Activated CD4-positive, alpha-beta memory T cell treated with anti-CD3 and anti-CD28 coated beads for 36 hours (primary cell): ENCODE measurements at regions of chr11 and their contacts with region 1.

Region 1: DNA sequence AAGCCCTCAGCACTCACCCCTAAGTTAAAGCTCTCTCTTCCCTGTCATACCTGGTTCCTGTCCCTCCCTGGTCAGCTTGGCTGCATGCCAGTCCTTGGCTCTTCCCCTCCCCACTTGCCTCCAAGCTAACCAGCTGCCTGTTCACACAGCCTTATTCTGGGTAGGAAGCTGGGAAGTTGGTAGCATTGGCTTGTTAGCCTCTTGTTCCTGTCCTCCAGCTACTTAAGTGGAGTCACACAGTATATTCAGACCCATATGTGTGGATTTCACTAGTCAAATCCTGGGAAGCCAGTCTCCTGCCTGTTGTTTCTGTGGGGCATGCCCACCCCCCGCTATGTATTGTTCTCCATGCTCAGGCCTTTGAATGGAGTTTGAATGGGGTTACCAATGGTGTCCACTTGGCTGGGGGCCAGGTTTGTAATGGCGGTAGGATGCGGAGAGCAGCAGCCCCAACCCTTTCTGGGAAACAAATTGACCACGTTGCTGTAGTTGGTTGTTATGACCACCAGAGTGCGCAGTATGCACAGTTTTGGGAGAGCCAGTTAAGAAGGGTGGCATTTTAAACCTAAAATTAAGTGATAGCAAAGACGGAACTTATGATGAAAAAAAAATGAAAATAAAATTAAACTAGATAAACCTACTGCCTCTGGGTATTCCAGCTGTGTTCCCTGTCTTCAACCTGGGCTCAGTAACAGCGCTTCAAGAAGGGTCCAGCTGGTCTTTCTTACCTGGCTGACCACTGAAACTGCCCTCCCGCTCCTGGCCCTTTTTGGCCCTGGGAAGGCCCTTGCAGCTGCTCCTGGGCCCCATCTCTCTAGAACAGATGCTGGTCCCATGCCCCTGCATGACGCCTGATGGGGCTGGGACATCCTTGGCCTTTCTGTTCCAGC is 10.7 kb upstream of the RPS3 start:
- DNase-seq: peak; percentile 84
- H3K4me3 Mint-ChIP-seq: no peak overlapping the region
- H3K27ac Mint-ChIP-seq: no peak overlapping the region
- H3K4me1 Mint-ChIP-seq: peaks cover 10% of the 10 kb centered on the region
- H3K27me3 Mint-ChIP-seq: peaks cover 6% of the 10 kb centered on the region

Region 2: DNA sequence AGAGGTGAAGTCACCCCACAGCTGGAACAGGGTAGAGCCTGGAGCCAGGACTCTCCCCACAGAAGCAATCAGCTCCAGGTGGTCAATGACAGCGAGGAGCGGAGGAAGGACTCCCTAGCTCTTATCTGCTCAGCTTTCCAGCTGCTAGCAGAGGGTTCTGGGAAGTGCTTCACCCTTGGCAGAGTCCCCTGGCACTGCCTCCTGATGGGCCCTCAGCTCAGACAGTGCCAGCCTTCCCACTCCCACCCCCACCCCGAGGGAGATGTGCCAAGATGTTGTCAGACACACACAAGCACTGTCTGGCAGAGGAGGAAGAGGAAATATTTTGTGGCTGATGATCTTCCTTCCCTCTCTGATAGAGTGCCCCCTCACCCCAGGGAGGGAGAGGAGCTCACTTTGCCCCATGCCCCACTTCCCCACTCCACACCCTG is 193.5 kb before region 1 on chr11:
- CTCF ChIA-PET with region 1: no interaction called
- POLR2A ChIA-PET with region 1: no interaction called
- intact Hi-C with region 1: no loop called
- DNase-seq: no peak
- H3K4me3 Mint-ChIP-seq: no peak overlapping the region
- H3K27ac Mint-ChIP-seq: no peak overlapping the region
- H3K4me1 Mint-ChIP-seq: no peaks in the 10 kb centered on the region
- H3K27me3 Mint-ChIP-seq: no peaks in the 10 kb centered on the region

Region 3: DNA sequence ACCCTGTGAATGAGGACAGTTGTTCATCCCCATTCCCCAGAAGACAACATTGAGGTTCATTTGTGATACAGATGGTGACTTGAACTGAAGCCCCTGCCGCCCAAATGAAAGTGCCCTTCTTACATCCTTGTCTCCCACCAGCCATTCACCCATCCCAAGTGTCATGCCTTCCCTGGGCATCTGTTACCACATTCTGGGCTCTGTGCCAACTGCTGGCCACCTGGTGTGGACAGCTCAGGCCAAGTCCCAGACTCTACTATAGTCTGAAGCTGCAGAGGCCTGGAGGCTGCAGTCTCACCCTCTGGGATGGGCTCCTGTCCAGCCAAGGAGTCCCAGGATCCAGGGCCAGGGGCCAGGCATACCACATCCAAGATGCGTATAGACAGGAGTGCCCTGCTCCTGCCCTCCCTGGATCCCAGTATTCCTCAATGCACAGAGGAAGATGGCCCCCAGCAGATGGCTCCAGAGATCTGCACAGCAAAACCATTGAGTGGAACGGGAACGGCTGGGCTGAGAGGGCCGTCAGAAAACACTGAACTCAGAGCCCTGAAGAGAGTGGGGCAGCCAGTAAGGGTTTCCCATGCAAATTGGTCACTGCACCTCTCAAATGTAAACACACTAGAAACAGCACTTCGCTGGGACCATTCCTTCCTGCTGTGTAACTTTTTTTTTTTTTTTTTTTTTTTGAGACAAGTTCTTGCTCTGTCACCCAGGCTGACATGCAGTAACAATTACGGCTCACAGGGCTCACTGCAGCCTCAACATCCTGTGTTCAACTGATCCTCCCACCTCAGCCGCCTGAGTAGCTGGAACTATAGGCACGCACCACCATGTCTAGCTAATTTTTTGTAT is 60.0 kb before region 1 on chr11:
- CTCF ChIA-PET with region 1: interaction called, 69 read pairs
- POLR2A ChIA-PET with region 1: no interaction called
- intact Hi-C with region 1: loop called (anchors 1 kb)
- DNase-seq: peak; percentile 77
- H3K4me3 Mint-ChIP-seq: no peak overlapping the region
- H3K27ac Mint-ChIP-seq: peak overlapping the region; percentile 70
- H3K4me1 Mint-ChIP-seq: peaks cover 60% of the 10 kb centered on the region
- H3K27me3 Mint-ChIP-seq: no peaks in the 10 kb centered on the region

Region 4: DNA sequence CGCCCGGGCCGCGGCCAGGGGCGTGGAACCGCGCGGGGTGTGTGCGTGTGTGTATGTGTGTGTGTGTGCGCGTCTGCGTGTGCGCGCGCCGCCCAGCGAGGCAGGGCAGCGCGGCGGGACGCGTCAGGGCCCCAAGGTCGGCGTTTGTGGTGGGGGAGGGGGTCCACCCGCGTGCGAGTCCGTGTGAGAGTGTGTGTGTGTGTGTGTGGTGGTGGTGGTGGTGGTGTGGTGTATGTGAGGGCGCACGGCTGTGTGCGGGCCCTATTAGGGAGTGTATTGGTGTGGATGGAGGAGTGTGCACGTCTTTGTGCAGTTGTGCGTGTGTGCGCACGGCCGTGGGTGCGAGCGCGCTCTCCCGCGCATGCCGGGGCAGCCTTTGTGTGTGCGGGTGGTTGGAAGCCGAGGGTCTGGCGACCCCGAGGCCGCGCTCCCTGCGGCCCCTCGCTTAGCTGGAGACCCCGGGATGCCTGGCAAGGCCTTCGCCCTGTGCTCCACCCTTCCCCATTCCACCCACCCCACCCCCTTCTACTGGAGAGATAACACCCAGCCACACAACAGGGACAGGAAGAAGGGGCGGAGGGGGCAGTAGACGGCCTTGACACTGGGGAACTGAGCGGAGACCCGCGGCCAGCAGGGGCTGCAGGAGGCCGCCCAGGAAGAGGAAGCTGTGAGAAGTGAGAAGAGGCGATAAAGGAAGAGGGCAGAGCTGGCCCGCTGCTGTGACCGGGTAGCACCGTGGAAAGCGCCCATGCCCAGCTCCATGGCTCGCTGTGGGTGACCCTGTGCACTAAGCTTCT is 36.6 kb before region 1 on chr11:
- CTCF ChIA-PET with region 1: interaction called, 15 read pairs
- POLR2A ChIA-PET with region 1: no interaction called
- intact Hi-C with region 1: no loop called
- DNase-seq: peak; percentile 65
- H3K4me3 Mint-ChIP-seq: peak overlapping the region; percentile 82
- H3K27ac Mint-ChIP-seq: peak overlapping the region; percentile 81
- H3K4me1 Mint-ChIP-seq: peaks cover 33% of the 10 kb centered on the region
- H3K27me3 Mint-ChIP-seq: no peaks in the 10 kb centered on the region

Region 5: GRCh38 chr11:75399344-75400145 is 10.9 kb after region 1 on chr11 and contains the start of gene RPS3:
- CTCF ChIA-PET with region 1: interaction called, 15 read pairs
- POLR2A ChIA-PET with region 1: interaction called, 3 read pairs
- intact Hi-C with region 1: no loop called
- DNase-seq: peak; percentile 92
- H3K4me3 Mint-ChIP-seq: peak within 1 kb of the TSS; percentile 100
- H3K27ac Mint-ChIP-seq: peak within 1 kb of the TSS; percentile 99
- H3K4me1 Mint-ChIP-seq: peaks cover 39% of the 10 kb centered on the region
- H3K27me3 Mint-ChIP-seq: no peaks in the 10 kb centered on the region
- total RNA-seq, gene RPS3: 4,423 to 4,525 TPM

Region 6: DNA sequence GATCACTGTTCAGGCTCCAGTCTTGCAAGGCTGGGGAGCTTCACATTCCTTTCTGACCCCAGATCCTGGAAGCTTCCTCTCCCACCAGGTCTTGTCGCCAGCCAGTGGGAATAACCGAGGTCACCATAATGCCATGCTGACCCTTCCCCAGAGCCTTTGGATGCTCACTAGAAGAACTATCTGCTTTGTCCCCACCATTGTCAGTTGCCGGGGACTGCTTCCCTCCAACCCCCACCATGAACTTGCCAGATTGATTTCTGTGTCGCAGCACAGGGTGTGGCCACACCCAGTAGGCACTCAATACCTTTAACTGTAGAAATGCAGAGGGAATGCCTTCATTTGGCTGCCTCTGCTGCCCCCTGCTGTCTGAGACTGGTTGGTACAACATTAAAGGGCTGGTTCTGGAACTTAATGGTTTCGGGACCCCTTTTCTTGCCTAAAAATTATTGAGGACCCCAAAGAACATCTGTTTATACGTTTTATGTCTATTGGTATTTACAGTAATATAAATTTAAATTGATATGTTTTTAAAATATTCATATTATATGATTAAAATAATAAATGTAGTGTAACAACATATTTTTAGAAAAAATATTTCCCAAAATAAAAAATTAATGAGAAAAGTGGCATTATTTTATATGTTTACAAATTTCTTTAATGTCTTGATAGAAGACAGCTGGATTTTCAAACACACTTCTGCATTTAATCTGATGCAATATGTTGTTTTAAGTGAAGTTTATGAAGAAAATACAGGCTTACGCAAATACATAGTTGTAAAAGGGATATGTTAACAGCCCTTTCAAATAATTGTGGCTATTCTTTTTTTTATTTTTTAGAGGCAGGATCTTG is 143.8 kb after region 1 on chr11:
- CTCF ChIA-PET with region 1: interaction called, 83 read pairs
- POLR2A ChIA-PET with region 1: no interaction called
- intact Hi-C with region 1: loop called (anchors 1 kb)
- DNase-seq: peak; percentile 89
- H3K4me3 Mint-ChIP-seq: no peak overlapping the region
- H3K27ac Mint-ChIP-seq: peak overlapping the region; percentile 39
- H3K4me1 Mint-ChIP-seq: peaks cover 37% of the 10 kb centered on the region
- H3K27me3 Mint-ChIP-seq: no peaks in the 10 kb centered on the region